ENCODE measurements at regions of chr9 and their contacts with region 1.

Region 1: DNA sequence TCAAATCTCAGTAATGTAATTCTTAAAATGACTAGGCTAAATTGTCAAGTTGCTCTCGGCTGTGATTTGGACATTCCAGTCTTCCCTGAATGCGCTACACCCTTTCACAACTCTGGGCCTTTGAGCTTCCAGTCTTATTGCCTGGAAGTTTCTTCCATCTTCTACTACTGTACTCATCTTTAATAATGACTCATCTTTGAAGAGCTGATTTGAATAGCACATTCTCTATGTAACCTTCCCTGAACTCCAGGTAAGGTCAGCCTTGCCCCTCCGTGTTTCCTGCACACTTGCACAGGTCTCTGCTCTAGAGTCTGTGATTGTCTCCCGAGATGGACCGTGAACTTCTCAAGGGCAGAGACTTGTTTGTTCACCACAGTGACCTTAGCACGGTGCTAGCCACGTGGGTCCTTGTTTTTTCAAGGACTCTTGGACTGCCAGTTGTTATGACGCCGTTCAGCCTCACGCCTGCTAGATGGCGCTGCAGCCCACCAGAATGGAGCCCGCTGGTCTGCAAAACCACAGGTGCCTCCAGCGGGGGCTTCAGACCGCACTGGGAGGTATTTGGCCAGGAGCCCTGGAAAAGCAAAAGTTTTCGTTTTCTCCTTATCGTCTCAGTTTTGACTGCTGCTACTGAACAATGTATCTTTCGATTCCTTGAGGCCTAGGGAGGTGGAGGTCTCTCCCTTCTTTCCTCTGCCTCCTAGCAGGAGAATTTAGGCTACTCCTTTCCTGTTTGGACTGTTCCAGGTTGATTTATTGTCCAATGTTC is 44.4 kb downstream of the SEC61B start:
- DNase-seq: peak; percentile 85
- H3K4me3 ChIP-seq: no peak overlapping the region
- H3K27ac ChIP-seq: no peak overlapping the region
- H3K4me1 ChIP-seq: peaks cover 14% of the 10 kb centered on the region
- H3K27me3 ChIP-seq: no peaks in the 10 kb centered on the region
- CTCF ChIP-seq: peak; percentile 94

Region 2: GRCh38 chr9:99807276-99807852 is 540.9 kb after region 1 on chr9:
- CTCF ChIA-PET with region 1: no interaction called
- POLR2A ChIA-PET with region 1: no interaction called
- intact Hi-C with region 1: loop called (anchors 5 kb)
- DNase-seq: peak; percentile 82
- H3K4me3 ChIP-seq: no peak overlapping the region
- H3K27ac ChIP-seq: no peak overlapping the region
- H3K4me1 ChIP-seq: peaks cover 24% of the 10 kb centered on the region
- H3K27me3 ChIP-seq: no peaks in the 10 kb centered on the region
- CTCF ChIP-seq: peak; percentile 89

Region 3: GRCh38 chr9:100028201-100028784 is 761.9 kb after region 1 on chr9:
- CTCF ChIA-PET with region 1: no interaction called
- POLR2A ChIA-PET with region 1: no interaction called
- intact Hi-C with region 1: loop called (anchors 10 kb)
- DNase-seq: peak; percentile 81
- H3K4me3 ChIP-seq: no peak overlapping the region
- H3K27ac ChIP-seq: no peak overlapping the region
- H3K4me1 ChIP-seq: peaks cover 20% of the 10 kb centered on the region
- H3K27me3 ChIP-seq: no peaks in the 10 kb centered on the region
- CTCF ChIP-seq: peak; percentile 94